OCI-LY7 (cell line): ENCODE measurements at regions of chr4 and their contacts with region 1.

Region 1: GRCh38 chr4:76430519-76431388 is 4.3 kb upstream of the SHROOM3 start:
- DNase-seq: peak; percentile 46
- H3K4me3 ChIP-seq: no peak overlapping the region
- H3K27ac ChIP-seq: no peak overlapping the region
- H3K4me1 ChIP-seq: no peaks in the 10 kb centered on the region
- CTCF ChIP-seq: peak; percentile 86

Region 2: GRCh38 chr4:76504613-76505465 is 74.1 kb after region 1 on chr4:
- CTCF ChIA-PET with region 1: no interaction called
- POLR2A ChIA-PET with region 1: no interaction called
- intact Hi-C with region 1: loop called (anchors 2 kb)
- DNase-seq: peak; percentile 32
- H3K4me3 ChIP-seq: no peak overlapping the region
- H3K27ac ChIP-seq: no peak overlapping the region
- H3K4me1 ChIP-seq: no peaks in the 10 kb centered on the region
- CTCF ChIP-seq: peak; percentile 84

Region 3: GRCh38 chr4:76748649-76749048 is 317.9 kb after region 1 on chr4:
- CTCF ChIA-PET with region 1: no interaction called
- POLR2A ChIA-PET with region 1: no interaction called
- intact Hi-C with region 1: loop called (anchors 5 kb)
- DNase-seq: peak; percentile 9
- H3K4me3 ChIP-seq: no peak overlapping the region
- H3K27ac ChIP-seq: no peak overlapping the region
- H3K4me1 ChIP-seq: no peaks in the 10 kb centered on the region
- CTCF ChIP-seq: peak; percentile 59